Spleen (tissue), 13 donors: ENCODE measurements at regions of chr14 and their contacts with region 1.

Region 1: GRCh38 chr14:55129428-55130195 is 560 bp downstream of the LGALS3 start:
- DNase-seq: peak; percentile 90
- H3K4me3 ChIP-seq: peak overlapping the region; percentile 49 to 88 (median 62)
- H3K27ac ChIP-seq: peak overlapping the region; percentile 78 to 91 (median 88)
- H3K4me1 ChIP-seq: peaks cover 14 to 96% (median 45%) of the 10 kb centered on the region in 6 donors
- H3K27me3 ChIP-seq: peaks cover 0 to 16% (median 0%) of the 10 kb centered on the region in 7 donors
- CTCF ChIP-seq: no peak
- POLR2A ChIP-seq: no peak

Region 2: DNA sequence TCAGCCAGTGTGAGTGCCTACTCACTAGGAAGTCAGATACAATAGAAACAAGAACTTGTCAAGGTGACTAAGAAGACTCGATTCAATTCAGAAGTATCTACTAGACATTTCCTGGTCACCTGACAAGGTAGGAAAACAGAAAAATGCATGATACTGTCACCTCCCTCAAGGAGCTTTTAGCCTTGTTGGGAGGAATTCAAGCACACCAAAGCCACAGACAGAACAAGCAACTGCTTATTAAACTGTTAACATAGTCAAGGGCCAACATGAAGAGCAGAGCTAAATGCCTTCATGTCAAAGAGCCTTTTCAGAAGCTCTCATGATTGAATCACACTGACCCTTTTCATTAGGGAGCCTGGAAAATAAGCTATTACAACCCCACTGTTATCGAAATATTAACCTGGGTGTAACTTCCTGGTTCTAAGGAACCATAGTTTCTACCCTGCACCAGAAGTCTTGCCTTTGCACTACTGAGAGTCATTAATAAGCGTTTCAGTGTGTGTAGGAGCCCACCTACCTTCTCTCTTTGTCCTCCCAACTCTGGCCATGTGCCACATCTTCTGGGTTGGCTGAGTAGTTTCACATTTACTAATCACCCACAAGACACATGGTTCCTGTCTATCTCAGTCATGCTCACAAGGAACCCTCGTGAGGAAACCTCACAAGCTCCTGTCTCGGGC is 31.6 kb before region 1 on chr14:
- intact Hi-C with region 1: loop called (anchors 5 kb)
- DNase-seq: no peak
- H3K4me3 ChIP-seq: no peak overlapping the region
- H3K27ac ChIP-seq: peak overlapping the region in 7 of 8 donors; percentile 29 to 86 (median 63)
- H3K4me1 ChIP-seq: peaks cover 17 to 57% (median 33%) of the 10 kb centered on the region in 6 donors
- H3K27me3 ChIP-seq: no peaks in the 10 kb centered on the region
- CTCF ChIP-seq: no peak
- POLR2A ChIP-seq: no peak